Mammary epithelial cell (primary cell): ENCODE measurements at regions of chrX and their contacts with region 1.

Region 1: GRCh38 chrX:81259020-81259713 is 57.3 kb downstream of the SH3BGRL start:
- DNase-seq: no peak
- H3K4me3 ChIP-seq: no peak overlapping the region
- H3K27ac ChIP-seq: peak overlapping the region; percentile 92
- H3K4me1 ChIP-seq: peaks cover 34% of the 10 kb centered on the region
- H3K27me3 ChIP-seq: no peaks in the 10 kb centered on the region
- CTCF ChIP-seq: no peak

Region 2: GRCh38 chrX:80792205-80792604 is 467.0 kb before region 1 on chrX:
- CTCF ChIA-PET with region 1: no interaction called
- dilution Hi-C with region 1: no loop called
- in situ Hi-C with region 1: loop called in 1 of 2 experiments (anchors 25 kb)
- intact Hi-C with region 1: no loop called
- DNase-seq: no peak
- H3K4me3 ChIP-seq: no peak overlapping the region
- H3K27ac ChIP-seq: no peak overlapping the region
- H3K4me1 ChIP-seq: no peaks in the 10 kb centered on the region
- H3K27me3 ChIP-seq: no peaks in the 10 kb centered on the region
- CTCF ChIP-seq: no peak

Region 3: DNA sequence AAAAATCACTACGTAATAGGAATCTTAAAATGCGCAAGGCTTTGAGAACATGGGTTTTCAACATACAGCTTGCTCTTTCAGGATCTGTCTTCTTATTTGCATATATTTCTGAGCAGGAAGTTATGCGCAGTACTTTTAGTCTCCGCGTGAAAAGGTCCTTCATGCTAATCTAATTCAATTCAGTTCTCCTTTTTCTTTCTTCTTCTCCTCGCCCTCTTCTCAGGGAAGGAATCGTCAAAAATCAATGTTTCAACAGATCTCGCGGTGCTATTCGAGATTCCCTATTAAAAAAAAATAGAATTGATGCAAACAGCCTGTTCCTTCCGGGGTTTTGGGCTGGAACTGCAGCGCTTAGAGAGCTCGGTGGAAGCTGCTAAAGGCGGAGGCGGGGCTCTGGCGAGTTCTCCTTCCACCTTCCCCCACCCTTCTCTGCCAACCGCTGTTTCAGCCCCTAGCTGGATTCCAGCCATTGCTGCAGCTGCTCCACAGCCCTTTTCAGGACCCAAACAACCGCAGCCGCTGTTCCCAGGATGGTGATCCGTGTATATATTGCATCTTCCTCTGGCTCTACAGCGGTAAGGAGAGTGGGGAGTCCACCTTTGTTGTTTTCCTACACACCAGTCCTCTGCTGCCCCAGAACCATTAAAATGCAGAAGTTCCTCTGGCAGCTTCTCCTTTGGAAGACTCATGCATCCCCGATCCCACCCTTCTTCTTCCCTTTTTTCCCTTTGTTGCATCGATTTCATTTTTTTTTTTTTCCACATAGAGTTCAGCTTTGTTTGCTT is 57.3 kb before region 1 on chrX and contains the starts of genes HMGN5 and SH3BGRL:
- CTCF ChIA-PET with region 1: interaction called, 3 read pairs
- dilution Hi-C with region 1: no loop called
- in situ Hi-C with region 1: no loop called
- intact Hi-C with region 1: loop called (anchors 5 kb)
- DNase-seq: peak; percentile 77
- H3K4me3 ChIP-seq: peak within 1 kb of the TSS; percentile 51 to 65 (median 64)
- H3K27ac ChIP-seq: peak within 1 kb of the TSS; percentile 78
- H3K4me1 ChIP-seq: peaks cover 9% of the 10 kb centered on the region
- H3K27me3 ChIP-seq: no peaks in the 10 kb centered on the region
- CTCF ChIP-seq: no peak
- total RNA-seq, gene HMGN5: 1.2 to 2.7 TPM
- total RNA-seq, gene SH3BGRL: 66.5 to 107 TPM